Cardiac septum (tissue), 1 donor: ENCODE measurements at regions of chr4 and their contacts with region 1.

Region 1: DNA sequence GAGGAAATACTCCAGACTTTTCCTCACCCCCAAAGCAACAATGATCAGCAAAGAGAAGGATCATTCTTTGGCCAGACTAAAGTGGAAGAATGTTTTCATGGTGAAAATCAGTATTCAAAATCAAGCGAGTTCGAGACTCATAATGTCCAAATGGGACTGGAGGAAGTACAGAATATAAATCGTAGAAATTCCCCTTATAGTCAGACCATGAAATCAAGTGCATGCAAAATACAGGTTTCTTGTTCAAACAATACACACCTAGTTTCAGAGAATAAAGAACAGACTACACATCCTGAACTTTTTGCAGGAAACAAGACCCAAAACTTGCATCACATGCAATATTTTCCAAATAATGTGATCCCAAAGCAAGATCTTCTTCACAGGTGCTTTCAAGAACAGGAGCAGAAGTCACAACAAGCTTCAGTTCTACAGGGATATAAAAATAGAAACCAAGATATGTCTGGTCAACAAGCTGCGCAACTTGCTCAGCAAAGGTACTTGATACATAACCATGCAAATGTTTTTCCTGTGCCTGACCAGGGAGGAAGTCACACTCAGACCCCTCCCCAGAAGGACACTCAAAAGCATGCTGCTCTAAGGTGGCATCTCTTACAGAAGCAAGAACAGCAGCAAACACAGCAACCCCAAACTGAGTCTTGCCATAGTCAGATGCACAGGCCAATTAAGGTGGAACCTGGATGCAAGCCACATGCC is 89.7 kb downstream of the TET2 start:
- DNase-seq: no peak

Region 2: GRCh38 chr4:105191621-105192210 is 44.6 kb before region 1 on chr4:
- intact Hi-C with region 1: loop called (anchors 5 kb)
- DNase-seq: no peak

Region 3: GRCh38 chr4:105318486-105318885 is 82.1 kb after region 1 on chr4:
- intact Hi-C with region 1: no loop called
- DNase-seq: no peak